ENCODE measurements at regions of chr20 and their contacts with region 1.

Region 1: GRCh38 chr20:33862709-33863403 is 51.7 kb downstream of the CHMP4B start:
- DNase-seq: peak; percentile 90
- H3K4me3 ChIP-seq: no peak overlapping the region
- H3K27ac ChIP-seq: peak overlapping the region in 1 of 2 experiments; percentile 95; a peak in 2 of 4 replicates
- H3K4me1 ChIP-seq: peaks cover 0 to 60% of the 10 kb centered on the region in 2 experiments; a peak in 2 of 4 replicates
- H3K27me3 ChIP-seq: 0 out of 2 replicates have a peak, but pooled peaks cover 4% of the 10 kb centered on the region
- CTCF ChIP-seq: peak; percentile 70
- EP300 ChIP-seq: no peak
- RAD21 ChIP-seq: peak; percentile 76

Region 2: GRCh38 chr20:33821270-33821836 is 41.5 kb before region 1 on chr20:
- CTCF ChIA-PET with region 1: no interaction called
- POLR2A ChIA-PET with region 1: no interaction called
- DNase-seq: no peak
- H3K4me3 ChIP-seq: no peak overlapping the region
- H3K27ac ChIP-seq: no peak overlapping the region
- H3K4me1 ChIP-seq: peaks cover 0 to 7% of the 10 kb centered on the region in 2 experiments; a peak in 1 of 4 replicates
- H3K27me3 ChIP-seq: no peaks in the 10 kb centered on the region
- CTCF ChIP-seq: no peak
- EP300 ChIP-seq: no peak
- RAD21 ChIP-seq: no peak

Region 3: GRCh38 chr20:33837998-33838864 is 24.6 kb before region 1 on chr20:
- CTCF ChIA-PET with region 1: interaction called, 12 read pairs
- POLR2A ChIA-PET with region 1: no interaction called
- DNase-seq: no peak
- H3K4me3 ChIP-seq: no peak overlapping the region
- H3K27ac ChIP-seq: peak overlapping the region in 1 of 2 experiments; percentile 93; a peak in 2 of 4 replicates
- H3K4me1 ChIP-seq: peaks cover 13 to 64% of the 10 kb centered on the region in 2 experiments
- H3K27me3 ChIP-seq: no peaks in the 10 kb centered on the region
- CTCF ChIP-seq: peak; percentile 24; the same call in 1 of the 2 replicates
- EP300 ChIP-seq: no peak
- RAD21 ChIP-seq: peak; percentile 66

Region 4: GRCh38 chr20:34022154-34022838 is 159.4 kb after region 1 on chr20:
- CTCF ChIA-PET with region 1: interaction called, 19 read pairs
- POLR2A ChIA-PET with region 1: no interaction called
- DNase-seq: peak; percentile 66
- H3K4me3 ChIP-seq: no peak overlapping the region
- H3K27ac ChIP-seq: no peak overlapping the region
- H3K4me1 ChIP-seq: peaks cover 9 to 45% of the 10 kb centered on the region in 2 experiments; a peak in 3 of 4 replicates
- H3K27me3 ChIP-seq: no peaks in the 10 kb centered on the region
- CTCF ChIP-seq: peak; percentile 56
- EP300 ChIP-seq: no peak
- RAD21 ChIP-seq: peak; percentile 73

Region 5: GRCh38 chr20:34069341-34070078 is 206.7 kb after region 1 on chr20:
- CTCF ChIA-PET with region 1: interaction called, 109 read pairs
- POLR2A ChIA-PET with region 1: no interaction called
- DNase-seq: peak; percentile 80
- H3K4me3 ChIP-seq: peak overlapping the region in 1 of 2 experiments; percentile 42; a peak in 1 of 4 replicates
- H3K27ac ChIP-seq: peak overlapping the region in 1 of 2 experiments; percentile 58; a peak in 2 of 4 replicates
- H3K4me1 ChIP-seq: peaks cover 4 to 45% of the 10 kb centered on the region in 2 experiments; a peak in 3 of 4 replicates
- H3K27me3 ChIP-seq: no peaks in the 10 kb centered on the region
- CTCF ChIP-seq: peak; percentile 92
- EP300 ChIP-seq: no peak
- RAD21 ChIP-seq: peak; percentile 98